Naive thymus-derived CD4-positive, alpha-beta T cell (primary cell): ENCODE measurements at regions of chr3 and their contacts with region 1.

Region 1: DNA sequence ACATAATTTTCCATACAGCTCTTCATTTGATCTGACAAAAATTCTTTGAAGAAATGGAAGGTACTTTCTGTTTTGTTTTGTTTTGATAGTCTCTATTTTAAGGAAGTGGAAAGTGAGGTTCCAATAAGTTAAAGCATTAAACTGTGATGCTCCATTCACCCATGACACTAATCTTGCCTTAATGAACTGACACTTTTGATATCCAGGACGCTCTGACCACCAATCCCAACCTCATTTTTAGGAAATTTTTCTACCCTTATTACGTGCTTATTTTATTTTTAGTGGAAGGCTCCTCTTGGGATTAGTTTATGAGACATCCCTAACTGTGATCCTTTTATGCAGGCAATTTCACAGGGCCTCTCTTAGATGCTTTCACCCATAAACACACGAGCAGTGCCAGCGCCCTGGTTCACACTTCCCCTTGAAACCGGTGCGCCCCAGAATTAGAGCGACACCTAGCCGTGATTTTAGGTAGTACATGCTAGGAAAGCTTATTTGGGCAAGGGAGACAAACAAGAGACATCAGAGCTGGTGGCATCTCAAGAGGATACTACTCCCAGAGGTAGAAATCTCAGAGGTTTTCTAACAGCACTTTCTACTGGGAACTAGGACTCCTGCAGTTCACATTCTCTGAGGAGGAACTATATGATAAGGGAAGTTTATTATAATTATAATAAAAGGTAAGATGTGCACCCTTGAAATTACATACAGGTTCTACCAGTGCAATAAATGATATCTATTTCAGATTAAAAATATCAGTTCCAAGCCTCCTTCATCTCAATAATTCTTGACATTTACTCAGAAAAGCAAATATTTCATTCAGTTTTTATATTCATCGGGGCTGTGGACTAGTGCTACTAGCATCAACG is 173.9 kb downstream of the SLC9A9 start:
- DNase-seq: peak; percentile 40 to 86 (median 73)
- ATAC-seq: peak; percentile 96
- H3K4me3 ChIP-seq: no peak overlapping the region
- H3K4me3 Mint-ChIP-seq: peak overlapping the region in 9 of 10 donors; percentile 7 to 73 (median 45)
- H3K27ac ChIP-seq: no peak overlapping the region
- H3K27ac Mint-ChIP-seq: peak overlapping the region in 6 of 9 donors; percentile 14 to 86 (median 57)
- H3K4me1 ChIP-seq: peaks cover 0 to 6% of the 10 kb centered on the region in 2 donors
- H3K4me1 Mint-ChIP-seq: peaks cover 7 to 17% (median 9%) of the 10 kb centered on the region in 7 donors
- H3K27me3 ChIP-seq: no peaks in the 10 kb centered on the region
- H3K27me3 Mint-ChIP-seq: no peaks in the 10 kb centered on the region

Region 2: DNA sequence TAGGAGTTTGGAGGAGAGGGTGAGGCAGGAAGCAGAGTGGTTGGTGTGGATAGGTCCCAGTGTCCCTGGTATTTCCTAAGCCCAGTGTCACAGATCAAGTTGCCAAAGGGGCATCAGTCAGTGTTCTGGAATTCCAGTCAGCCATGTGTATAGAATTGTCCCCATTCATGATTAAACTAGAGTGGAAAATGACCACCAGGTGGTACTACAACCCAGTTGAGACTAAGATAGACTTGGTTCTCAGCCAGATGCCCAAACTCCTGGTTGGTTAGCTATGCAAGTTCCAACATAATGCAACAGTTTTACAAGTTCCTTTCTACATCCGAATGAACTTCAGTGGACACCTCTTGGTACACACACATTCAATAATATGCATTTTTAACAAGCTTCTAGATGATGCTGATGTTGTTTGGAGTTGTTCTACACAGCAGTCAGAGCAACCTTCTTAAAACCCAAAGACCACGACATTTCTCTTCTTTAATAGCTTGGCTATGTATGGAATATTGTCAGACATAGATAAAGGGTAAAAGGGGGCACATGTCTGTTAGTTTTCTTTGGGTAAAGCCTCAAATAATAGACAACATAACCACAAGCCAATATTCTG is 1087.4 kb before region 1 on chr3:
- CTCF ChIA-PET with region 1: no interaction called
- POLR2A ChIA-PET with region 1: no interaction called
- intact Hi-C with region 1: loop called in 1 of 2 experiments (anchors 2 kb)
- DNase-seq: peak in 7 of 9 donors; percentile 15 to 51 (median 28)
- ATAC-seq: peak; percentile 74
- H3K4me3 ChIP-seq: no peak overlapping the region
- H3K4me3 Mint-ChIP-seq: no peak overlapping the region
- H3K27ac ChIP-seq: no peak overlapping the region
- H3K27ac Mint-ChIP-seq: no peak overlapping the region
- H3K4me1 ChIP-seq: no peaks in the 10 kb centered on the region
- H3K4me1 Mint-ChIP-seq: no peaks in the 10 kb centered on the region
- H3K27me3 ChIP-seq: no peaks in the 10 kb centered on the region
- H3K27me3 Mint-ChIP-seq: peaks cover 6 to 49% (median 16%) of the 10 kb centered on the region in 5 donors

Region 3: GRCh38 chr3:143040261-143040879 is 634.0 kb before region 1 on chr3:
- CTCF ChIA-PET with region 1: interaction called, 3 read pairs
- POLR2A ChIA-PET with region 1: no interaction called
- intact Hi-C with region 1: loop called in 1 of 2 experiments (anchors 1 kb)
- DNase-seq: peak in 1 of 9 donors; percentile 13
- ATAC-seq: no peak
- H3K4me3 ChIP-seq: no peak overlapping the region
- H3K4me3 Mint-ChIP-seq: no peak overlapping the region
- H3K27ac ChIP-seq: no peak overlapping the region
- H3K27ac Mint-ChIP-seq: no peak overlapping the region
- H3K4me1 ChIP-seq: no peaks in the 10 kb centered on the region
- H3K4me1 Mint-ChIP-seq: peaks cover 0 to 16% (median 5%) of the 10 kb centered on the region in 7 donors
- H3K27me3 ChIP-seq: no peaks in the 10 kb centered on the region
- H3K27me3 Mint-ChIP-seq: no peaks in the 10 kb centered on the region

Region 4: DNA sequence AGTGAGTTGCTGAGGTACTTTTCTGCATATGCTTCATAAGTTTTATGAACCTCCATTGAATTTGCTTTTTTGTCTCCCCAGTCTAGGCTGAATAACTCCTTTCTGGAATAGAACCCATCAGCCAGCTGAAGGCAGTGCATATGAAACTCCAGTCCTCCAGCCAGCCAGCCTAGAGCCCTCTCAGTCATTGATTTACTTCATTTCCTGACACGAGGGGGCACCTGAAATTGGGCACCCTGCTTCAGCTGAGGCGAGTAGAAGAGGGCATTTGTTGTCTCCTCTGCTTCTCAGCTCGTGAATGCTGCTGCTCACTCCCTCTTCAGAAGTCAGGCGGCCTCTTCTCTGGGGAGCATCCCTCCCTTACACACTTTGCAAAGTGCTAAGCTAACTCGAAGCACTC is 522.3 kb before region 1 on chr3:
- CTCF ChIA-PET with region 1: no interaction called
- POLR2A ChIA-PET with region 1: no interaction called
- intact Hi-C with region 1: loop called in 1 of 2 experiments (anchors 1 kb)
- DNase-seq: no peak
- ATAC-seq: no peak
- H3K4me3 ChIP-seq: no peak overlapping the region
- H3K4me3 Mint-ChIP-seq: peak overlapping the region in 2 of 10 donors; percentile 14 to 18
- H3K27ac ChIP-seq: no peak overlapping the region
- H3K27ac Mint-ChIP-seq: peak overlapping the region in 4 of 9 donors; percentile 26 to 70 (median 50)
- H3K4me1 ChIP-seq: peaks cover 0 to 3% of the 10 kb centered on the region in 2 donors
- H3K4me1 Mint-ChIP-seq: peaks cover 0 to 45% (median 35%) of the 10 kb centered on the region in 7 donors
- H3K27me3 ChIP-seq: no peaks in the 10 kb centered on the region
- H3K27me3 Mint-ChIP-seq: no peaks in the 10 kb centered on the region

Region 5: GRCh38 chr3:143433787-143434378 is 240.5 kb before region 1 on chr3:
- CTCF ChIA-PET with region 1: no interaction called
- POLR2A ChIA-PET with region 1: no interaction called
- intact Hi-C with region 1: loop called in 1 of 2 experiments (anchors 1 kb)
- DNase-seq: peak in 1 of 9 donors; percentile 12
- ATAC-seq: no peak
- H3K4me3 ChIP-seq: no peak overlapping the region
- H3K4me3 Mint-ChIP-seq: no peak overlapping the region
- H3K27ac ChIP-seq: no peak overlapping the region
- H3K27ac Mint-ChIP-seq: no peak overlapping the region
- H3K4me1 ChIP-seq: no peaks in the 10 kb centered on the region
- H3K4me1 Mint-ChIP-seq: peaks cover 0 to 11% (median 0%) of the 10 kb centered on the region in 7 donors
- H3K27me3 ChIP-seq: no peaks in the 10 kb centered on the region
- H3K27me3 Mint-ChIP-seq: no peaks in the 10 kb centered on the region

Region 6: DNA sequence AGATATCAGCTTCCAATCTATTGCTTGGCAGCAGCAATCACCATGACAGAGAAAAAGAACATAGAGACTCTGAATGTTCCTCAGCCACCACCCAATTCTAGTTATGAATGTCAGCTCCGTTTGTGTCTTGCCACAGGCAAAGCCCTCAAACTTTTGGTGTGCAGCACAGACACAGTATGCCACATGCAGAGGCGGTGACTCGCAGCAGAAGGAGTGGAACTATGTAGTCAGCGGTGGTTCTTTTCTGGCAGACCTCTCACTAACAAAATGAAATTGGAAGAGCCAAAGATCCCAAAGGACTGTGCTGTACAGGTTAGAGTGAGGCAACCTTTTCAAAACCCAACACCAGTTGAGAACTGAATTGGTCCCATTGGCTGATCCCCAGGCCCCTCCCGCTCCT is 47.0 kb before region 1 on chr3:
- CTCF ChIA-PET with region 1: no interaction called
- POLR2A ChIA-PET with region 1: no interaction called
- intact Hi-C with region 1: no loop called
- DNase-seq: peak in 1 of 9 donors; percentile 22
- ATAC-seq: no peak
- H3K4me3 ChIP-seq: no peak overlapping the region
- H3K4me3 Mint-ChIP-seq: no peak overlapping the region
- H3K27ac ChIP-seq: no peak overlapping the region
- H3K27ac Mint-ChIP-seq: no peak overlapping the region
- H3K4me1 ChIP-seq: no peaks in the 10 kb centered on the region
- H3K4me1 Mint-ChIP-seq: no peaks in the 10 kb centered on the region
- H3K27me3 ChIP-seq: no peaks in the 10 kb centered on the region
- H3K27me3 Mint-ChIP-seq: no peaks in the 10 kb centered on the region

Region 7: DNA sequence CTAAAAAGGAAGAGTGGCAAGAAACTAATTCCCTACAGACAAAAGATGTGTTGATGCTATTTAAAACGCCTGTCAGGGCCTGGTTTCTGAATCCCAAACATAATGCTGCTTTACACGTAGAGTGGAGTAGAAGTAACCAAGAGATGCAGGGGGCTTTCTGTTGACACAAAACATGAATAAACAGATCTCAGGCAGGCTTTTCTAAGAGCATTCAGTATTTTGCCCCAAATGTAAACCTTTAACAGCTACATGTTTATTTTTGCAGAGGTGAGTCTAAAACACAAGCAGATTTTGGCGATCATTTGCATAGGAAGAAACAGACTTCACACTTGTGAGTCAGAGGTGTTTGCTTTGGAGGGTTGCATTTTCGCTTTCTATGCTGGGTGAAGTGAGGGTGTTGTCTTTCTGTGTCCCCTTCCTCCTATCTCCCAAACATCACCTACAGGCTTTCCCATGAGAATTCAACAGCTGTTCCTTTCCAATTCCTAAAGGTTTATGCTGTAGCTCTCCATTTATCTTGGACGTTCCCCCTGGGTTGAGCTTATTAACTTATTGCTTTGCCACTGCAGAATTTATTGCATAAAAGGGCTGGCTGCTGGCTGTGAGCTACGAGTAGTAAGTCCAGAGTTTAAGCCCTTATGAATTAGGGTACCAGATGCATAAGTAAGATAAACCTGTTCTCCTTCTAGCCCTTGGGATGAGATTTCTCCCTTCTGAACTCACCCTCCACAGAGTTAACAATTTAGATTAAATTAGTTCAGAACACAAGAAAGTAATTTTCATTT is 454.0 kb after region 1 on chr3:
- CTCF ChIA-PET with region 1: no interaction called
- POLR2A ChIA-PET with region 1: no interaction called
- intact Hi-C with region 1: no loop called
- DNase-seq: no peak
- ATAC-seq: peak; percentile 31
- H3K4me3 ChIP-seq: no peak overlapping the region
- H3K4me3 Mint-ChIP-seq: no peak overlapping the region
- H3K27ac ChIP-seq: no peak overlapping the region
- H3K27ac Mint-ChIP-seq: no peak overlapping the region
- H3K4me1 ChIP-seq: no peaks in the 10 kb centered on the region
- H3K4me1 Mint-ChIP-seq: no peaks in the 10 kb centered on the region
- H3K27me3 ChIP-seq: no peaks in the 10 kb centered on the region
- H3K27me3 Mint-ChIP-seq: peaks cover 0 to 7% (median 5%) of the 10 kb centered on the region in 5 donors

Region 8: DNA sequence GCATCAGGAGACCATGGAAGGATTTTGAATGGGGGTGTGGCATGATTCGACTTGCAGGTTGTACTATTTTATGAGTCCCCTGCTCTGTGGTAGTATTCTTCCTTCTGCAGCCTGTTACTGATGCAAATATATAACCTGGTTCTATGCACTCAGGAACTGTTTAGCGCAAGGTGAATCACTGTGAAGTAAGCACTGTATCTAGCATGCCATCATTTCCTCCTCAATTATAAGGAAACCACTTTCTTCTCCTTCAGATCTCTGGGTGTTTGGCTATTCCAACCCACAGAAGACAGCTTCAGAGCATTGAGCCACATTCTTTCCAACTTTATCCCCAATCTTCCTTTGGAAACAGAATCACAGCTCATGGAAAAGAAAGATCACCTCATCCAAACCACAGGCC is 474.0 kb after region 1 on chr3:
- CTCF ChIA-PET with region 1: no interaction called
- POLR2A ChIA-PET with region 1: no interaction called
- intact Hi-C with region 1: no loop called
- DNase-seq: no peak
- ATAC-seq: no peak
- H3K4me3 ChIP-seq: no peak overlapping the region
- H3K4me3 Mint-ChIP-seq: no peak overlapping the region
- H3K27ac ChIP-seq: no peak overlapping the region
- H3K27ac Mint-ChIP-seq: no peak overlapping the region
- H3K4me1 ChIP-seq: no peaks in the 10 kb centered on the region
- H3K4me1 Mint-ChIP-seq: no peaks in the 10 kb centered on the region
- H3K27me3 ChIP-seq: no peaks in the 10 kb centered on the region
- H3K27me3 Mint-ChIP-seq: peaks cover 0 to 24% (median 16%) of the 10 kb centered on the region in 5 donors

Region 9: GRCh38 chr3:144314946-144315345 is 640.6 kb after region 1 on chr3:
- CTCF ChIA-PET with region 1: no interaction called
- POLR2A ChIA-PET with region 1: no interaction called
- intact Hi-C with region 1: no loop called
- DNase-seq: no peak
- ATAC-seq: no peak
- H3K4me3 ChIP-seq: no peak overlapping the region
- H3K4me3 Mint-ChIP-seq: no peak overlapping the region
- H3K27ac ChIP-seq: no peak overlapping the region
- H3K27ac Mint-ChIP-seq: no peak overlapping the region
- H3K4me1 ChIP-seq: no peaks in the 10 kb centered on the region
- H3K4me1 Mint-ChIP-seq: no peaks in the 10 kb centered on the region
- H3K27me3 ChIP-seq: no peaks in the 10 kb centered on the region
- H3K27me3 Mint-ChIP-seq: peaks cover 0 to 21% (median 14%) of the 10 kb centered on the region in 5 donors